ENCODE measurements at regions of chr20 and their contacts with region 1.

Region 1: GRCh38 chr20:1734269-1734858 is 76.8 kb upstream of the SIRPG start:
- DNase-seq: peak; percentile 65
- H3K4me3 Mint-ChIP-seq: no peak overlapping the region
- H3K27ac Mint-ChIP-seq: peak overlapping the region; percentile 5
- H3K4me1 Mint-ChIP-seq: peaks cover 37% of the 10 kb centered on the region
- H3K27me3 Mint-ChIP-seq: no peaks in the 10 kb centered on the region

Region 2: DNA sequence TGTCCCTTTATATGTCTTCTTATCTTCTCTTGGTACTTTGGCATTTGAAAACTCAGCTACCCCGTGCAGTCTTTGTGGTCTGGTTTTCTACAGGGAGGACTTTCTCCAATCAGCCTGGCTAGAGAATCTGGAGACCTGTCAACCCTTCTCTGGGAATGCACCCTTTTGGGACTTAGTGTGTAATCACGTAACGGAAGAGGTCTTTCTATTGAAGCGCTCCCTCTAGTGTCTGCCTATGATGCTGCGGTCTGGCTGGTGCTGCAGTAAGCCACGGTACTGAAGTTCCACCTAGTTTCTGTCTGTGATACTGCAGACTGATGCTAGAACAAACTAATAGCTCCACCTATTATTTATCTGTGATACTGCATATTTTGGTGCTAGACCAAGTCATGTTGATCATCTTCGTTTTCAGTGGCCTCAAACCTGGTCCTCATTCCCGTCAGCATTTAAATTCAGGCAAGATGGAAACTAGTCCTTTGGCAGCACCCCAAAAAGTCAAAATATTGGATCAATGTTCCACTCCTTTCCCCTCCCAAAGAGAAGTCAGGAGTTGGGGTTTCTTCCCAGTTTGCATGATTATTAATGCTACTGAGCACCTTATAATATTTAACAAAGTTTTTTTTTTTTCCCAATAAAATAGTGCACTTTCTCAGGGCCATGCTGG is 230.7 kb before region 1 on chr20:
- CTCF ChIA-PET with region 1: interaction called, 18 read pairs
- intact Hi-C with region 1: no loop called
- DNase-seq: peak; percentile 91
- H3K4me3 Mint-ChIP-seq: no peak overlapping the region
- H3K27ac Mint-ChIP-seq: no peak overlapping the region
- H3K4me1 Mint-ChIP-seq: peaks cover 6% of the 10 kb centered on the region
- H3K27me3 Mint-ChIP-seq: peaks cover 9% of the 10 kb centered on the region

Region 3: GRCh38 chr20:1555952-1556351 is 178.4 kb before region 1 on chr20:
- CTCF ChIA-PET with region 1: interaction called, 32 read pairs
- intact Hi-C with region 1: loop called (anchors 2 kb)
- DNase-seq: no peak
- H3K4me3 Mint-ChIP-seq: no peak overlapping the region
- H3K27ac Mint-ChIP-seq: no peak overlapping the region
- H3K4me1 Mint-ChIP-seq: peaks cover 3% of the 10 kb centered on the region
- H3K27me3 Mint-ChIP-seq: no peaks in the 10 kb centered on the region

Region 4: GRCh38 chr20:1619861-1620444 is 114.4 kb before region 1 on chr20 and contains the start of gene SIRPB1:
- CTCF ChIA-PET with region 1: interaction called, 13 read pairs
- intact Hi-C with region 1: no loop called
- DNase-seq: peak; percentile 42
- H3K4me3 Mint-ChIP-seq: no peak within 1 kb of the TSS
- H3K27ac Mint-ChIP-seq: peak within 1 kb of the TSS; percentile 21
- H3K4me1 Mint-ChIP-seq: peaks cover 57% of the 10 kb centered on the region
- H3K27me3 Mint-ChIP-seq: no peaks in the 10 kb centered on the region
- total RNA-seq, gene SIRPB1: 1.4 to 2.0 TPM

Region 5: GRCh38 chr20:1671891-1672669 is 62.3 kb before region 1 on chr20:
- CTCF ChIA-PET with region 1: interaction called, 6 read pairs
- intact Hi-C with region 1: loop called (anchors 5 kb)
- DNase-seq: peak; percentile 73
- H3K4me3 Mint-ChIP-seq: peak overlapping the region; percentile 44
- H3K27ac Mint-ChIP-seq: peak overlapping the region; percentile 97
- H3K4me1 Mint-ChIP-seq: peaks cover 99% of the 10 kb centered on the region
- H3K27me3 Mint-ChIP-seq: no peaks in the 10 kb centered on the region

Region 6: DNA sequence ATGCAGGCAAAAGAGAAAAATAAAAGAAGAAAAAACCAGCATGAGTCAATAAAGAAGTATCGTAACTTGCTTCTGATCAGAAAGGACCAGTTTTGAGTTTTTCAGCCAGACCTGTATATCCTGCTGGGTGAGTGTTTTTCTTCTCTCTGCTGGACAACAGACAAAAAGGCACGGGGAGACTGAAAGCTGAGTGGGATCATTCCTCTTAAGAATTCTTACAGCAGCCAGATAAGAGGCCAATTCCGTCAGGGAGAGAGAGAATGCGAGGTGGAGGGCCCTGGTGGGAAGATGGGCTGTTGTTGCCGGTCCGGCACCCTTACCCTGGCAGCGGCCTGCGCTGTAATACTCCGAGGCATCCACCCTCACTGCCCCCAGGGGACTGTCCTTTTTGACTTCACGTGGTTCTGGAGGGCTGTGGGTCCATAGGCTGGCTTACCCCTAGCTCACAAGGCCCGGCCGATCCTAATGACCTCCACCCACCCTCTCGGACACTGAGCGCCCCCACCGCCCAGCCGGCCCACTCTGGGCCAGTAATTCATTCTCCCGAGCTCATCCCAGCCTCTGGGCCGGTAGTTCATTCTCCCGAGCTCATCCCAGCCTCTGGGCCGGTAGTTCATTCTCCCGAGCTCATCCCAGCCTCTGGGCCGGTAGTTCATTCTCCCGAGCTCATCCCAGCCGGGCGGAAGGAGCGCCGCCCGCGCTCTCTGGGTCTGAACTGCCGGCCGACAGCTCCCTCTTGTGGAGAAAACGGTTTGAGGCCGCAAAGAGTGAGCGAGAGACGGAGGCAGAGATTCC is 42.5 kb after region 1 on chr20:
- CTCF ChIA-PET with region 1: interaction called, 15 read pairs
- intact Hi-C with region 1: no loop called
- DNase-seq: peak; percentile 90
- H3K4me3 Mint-ChIP-seq: peak overlapping the region; percentile 79
- H3K27ac Mint-ChIP-seq: no peak overlapping the region
- H3K4me1 Mint-ChIP-seq: peaks cover 15% of the 10 kb centered on the region
- H3K27me3 Mint-ChIP-seq: peaks cover 4% of the 10 kb centered on the region